ENCODE measurements at regions of chr10 and their contacts with region 1.

Region 1: GRCh38 chr10:68720793-68721672 is at the start of gene CCAR1:
- DNase-seq: peak; percentile 86 to 97 (median 96)
- ATAC-seq: peak; percentile 99
- H3K4me3 ChIP-seq: peak within 1 kb of the TSS; percentile 64
- H3K4me3 Mint-ChIP-seq: peak within 1 kb of the TSS; percentile 87 to 100 (median 96)
- H3K27ac ChIP-seq: peak within 1 kb of the TSS; percentile 96
- H3K27ac Mint-ChIP-seq: peak within 1 kb of the TSS; percentile 95 to 99 (median 98)
- H3K4me1 ChIP-seq: peaks cover 6 to 7% of the 10 kb centered on the region in 2 donors
- H3K4me1 Mint-ChIP-seq: peaks cover 10 to 23% (median 16%) of the 10 kb centered on the region in 7 donors
- H3K27me3 ChIP-seq: no peaks in the 10 kb centered on the region
- H3K27me3 Mint-ChIP-seq: peaks cover 0 to 2% (median 0%) of the 10 kb centered on the region in 5 donors
- total RNA-seq, gene CCAR1: 64.4 to 89.5 (median 88.2) TPM

Region 2: DNA sequence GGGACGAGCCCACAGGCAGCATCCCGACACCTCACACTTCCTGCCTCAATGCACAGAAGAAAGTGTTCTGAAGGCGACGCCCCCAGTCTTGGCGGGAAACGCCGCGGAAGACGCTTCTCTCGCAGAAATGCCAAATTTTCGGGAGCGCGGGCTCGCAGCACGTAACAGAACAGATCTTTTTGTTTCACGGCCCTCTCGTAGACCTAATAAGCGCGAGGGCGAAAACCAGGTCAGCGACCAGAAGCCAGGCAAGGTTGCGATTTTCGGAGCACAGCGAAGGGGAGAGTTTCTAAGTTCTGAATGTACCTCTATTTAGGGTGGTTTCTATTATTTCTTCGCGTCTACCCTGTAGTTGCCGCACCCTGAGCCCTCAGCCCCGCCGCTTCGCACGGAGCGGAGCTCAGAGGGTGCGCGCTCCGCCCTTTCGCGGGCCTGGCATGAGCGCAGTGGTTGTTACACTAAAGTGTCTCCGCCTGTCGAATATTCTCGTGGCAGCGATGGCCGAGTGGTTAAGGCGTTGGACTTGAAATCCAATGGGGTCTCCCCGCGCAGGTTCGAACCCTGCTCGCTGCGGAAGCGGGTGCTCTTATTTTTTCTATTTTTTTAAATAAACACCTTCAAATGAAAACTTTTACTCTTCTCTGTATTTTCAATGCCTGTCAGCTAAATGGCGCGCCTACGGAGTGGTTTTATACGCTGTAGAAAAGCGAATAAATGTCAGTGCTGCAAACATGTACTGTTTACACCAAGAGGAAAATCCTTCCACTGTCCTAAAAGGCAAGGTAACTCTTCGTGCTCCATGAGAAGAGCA is 956.8 kb before region 1 on chr10:
- CTCF ChIA-PET with region 1: no interaction called
- POLR2A ChIA-PET with region 1: no interaction called
- intact Hi-C with region 1: loop called in 1 of 2 experiments (anchors 2 kb)
- DNase-seq: peak; percentile 96 to 99 (median 98)
- ATAC-seq: peak; percentile 88
- H3K4me3 ChIP-seq: peak overlapping the region; percentile 99
- H3K4me3 Mint-ChIP-seq: peak overlapping the region; percentile 81 to 99 (median 94)
- H3K27ac ChIP-seq: peak overlapping the region; percentile 81
- H3K27ac Mint-ChIP-seq: peak overlapping the region; percentile 95 to 100 (median 100)
- H3K4me1 ChIP-seq: peaks cover 4 to 6% of the 10 kb centered on the region in 2 donors
- H3K4me1 Mint-ChIP-seq: peaks cover 0 to 37% (median 14%) of the 10 kb centered on the region in 7 donors
- H3K27me3 ChIP-seq: no peaks in the 10 kb centered on the region
- H3K27me3 Mint-ChIP-seq: peaks cover 0 to 16% (median 0%) of the 10 kb centered on the region in 5 donors

Region 3: DNA sequence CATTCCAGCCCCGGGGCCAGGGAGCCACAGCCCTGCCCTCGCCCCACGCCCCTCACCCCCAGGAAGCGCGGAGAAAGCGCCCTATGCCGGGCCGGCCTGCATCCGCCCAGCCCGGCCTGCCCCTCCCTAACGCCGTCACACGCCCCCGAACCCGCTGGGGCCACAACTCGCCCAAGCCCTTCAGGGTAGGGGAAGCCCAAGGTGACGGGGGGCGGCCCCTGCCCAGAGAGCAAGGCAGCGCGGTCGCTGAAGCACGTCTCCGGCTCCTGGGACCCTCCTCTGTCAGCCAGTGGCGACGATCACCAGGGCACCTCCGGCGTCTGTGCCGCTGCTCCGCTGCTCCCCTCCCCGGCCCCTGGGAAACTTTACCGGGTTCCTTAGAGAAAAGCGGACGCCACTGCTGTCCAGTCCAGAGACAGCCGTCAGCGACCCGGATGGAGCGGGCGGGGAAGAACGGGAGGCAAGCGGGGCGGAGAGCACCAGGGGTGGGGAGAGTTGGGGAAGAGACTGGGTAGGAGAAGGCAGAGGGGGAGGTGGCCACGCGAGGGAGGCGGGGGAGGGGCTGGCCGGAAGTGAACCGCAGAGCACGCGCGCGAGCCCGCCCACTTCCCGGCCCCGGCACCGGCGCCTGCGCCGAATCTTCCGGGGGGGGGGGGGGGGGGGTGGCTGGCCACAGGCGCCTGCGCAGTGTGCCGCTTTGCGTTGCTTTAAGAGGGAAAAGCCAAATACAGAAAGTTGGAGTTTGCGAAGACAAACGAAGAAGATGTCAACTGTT is 646.1 kb before region 1 on chr10 and contains the start of gene HERC4:
- CTCF ChIA-PET with region 1: no interaction called
- POLR2A ChIA-PET with region 1: no interaction called
- intact Hi-C with region 1: loop called in 1 of 2 experiments (anchors 2 kb)
- DNase-seq: peak; percentile 80 to 91 (median 89)
- ATAC-seq: peak; percentile 97
- H3K4me3 ChIP-seq: peak within 1 kb of the TSS; percentile 91
- H3K4me3 Mint-ChIP-seq: peak within 1 kb of the TSS; percentile 91 to 98 (median 96)
- H3K27ac ChIP-seq: peak within 1 kb of the TSS; percentile 96
- H3K27ac Mint-ChIP-seq: peak within 1 kb of the TSS; percentile 89 to 95 (median 94)
- H3K4me1 ChIP-seq: peaks cover 15 to 21% of the 10 kb centered on the region in 2 donors
- H3K4me1 Mint-ChIP-seq: peaks cover 26 to 51% (median 41%) of the 10 kb centered on the region in 7 donors
- H3K27me3 ChIP-seq: peaks cover 0 to 3% of the 10 kb centered on the region in 2 donors
- H3K27me3 Mint-ChIP-seq: peaks cover 0 to 2% (median 0%) of the 10 kb centered on the region in 5 donors
- total RNA-seq, gene HERC4: 65.7 to 113 (median 78.6) TPM

Region 4: DNA sequence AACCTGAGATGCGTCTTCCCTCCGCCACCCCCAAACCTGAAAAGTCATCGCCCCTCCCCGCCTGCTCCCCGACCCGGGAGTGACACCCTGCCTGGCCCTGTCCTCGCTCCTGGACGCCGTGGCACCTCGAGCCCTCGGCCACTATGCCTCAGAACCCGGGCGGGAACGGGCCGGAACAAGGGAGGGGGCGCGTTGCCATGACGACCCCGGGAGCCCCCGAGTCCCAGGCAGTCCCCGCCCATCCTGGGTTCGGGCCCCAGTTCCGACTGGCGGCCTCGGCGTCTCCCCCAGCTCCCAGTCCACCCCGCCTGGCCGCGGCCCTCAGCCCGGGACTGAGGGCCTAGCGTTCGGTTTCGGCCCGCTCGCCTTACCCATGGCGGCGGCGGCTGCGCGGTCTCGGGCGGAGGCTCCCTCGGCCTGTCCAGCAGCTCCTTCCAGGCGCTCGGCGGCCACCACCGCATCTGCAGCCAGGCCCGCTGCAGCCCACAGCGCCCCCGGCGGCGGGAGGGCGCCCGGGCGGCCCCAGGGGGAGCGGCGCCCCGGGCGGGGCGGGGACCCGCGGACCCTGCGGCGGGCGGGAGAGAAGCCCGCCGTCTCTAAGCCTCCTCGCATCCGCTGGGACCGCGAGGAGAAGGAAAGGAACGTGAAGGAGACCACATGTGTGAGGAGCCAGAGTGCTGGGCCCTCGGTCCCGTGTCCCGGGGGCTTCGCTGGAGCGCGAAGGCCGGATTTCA is 314.1 kb before region 1 on chr10 and contains the start of gene RUFY2:
- CTCF ChIA-PET with region 1: no interaction called
- POLR2A ChIA-PET with region 1: interaction called, 3 read pairs
- intact Hi-C with region 1: loop called (anchors 2 to 5 kb)
- DNase-seq: peak; percentile 61 to 91 (median 74)
- ATAC-seq: peak; percentile 98
- H3K4me3 ChIP-seq: peak within 1 kb of the TSS; percentile 73
- H3K4me3 Mint-ChIP-seq: peak within 1 kb of the TSS; percentile 85 to 96 (median 89)
- H3K27ac ChIP-seq: peak within 1 kb of the TSS; percentile 76
- H3K27ac Mint-ChIP-seq: peak within 1 kb of the TSS; percentile 62 to 90 (median 81)
- H3K4me1 ChIP-seq: peaks cover 3 to 7% of the 10 kb centered on the region in 2 donors
- H3K4me1 Mint-ChIP-seq: peaks cover 10 to 19% (median 17%) of the 10 kb centered on the region in 7 donors
- H3K27me3 ChIP-seq: no peaks in the 10 kb centered on the region
- H3K27me3 Mint-ChIP-seq: no peaks in the 10 kb centered on the region
- total RNA-seq, gene RUFY2: 15.1 to 24.7 (median 20.4) TPM

Region 5: DNA sequence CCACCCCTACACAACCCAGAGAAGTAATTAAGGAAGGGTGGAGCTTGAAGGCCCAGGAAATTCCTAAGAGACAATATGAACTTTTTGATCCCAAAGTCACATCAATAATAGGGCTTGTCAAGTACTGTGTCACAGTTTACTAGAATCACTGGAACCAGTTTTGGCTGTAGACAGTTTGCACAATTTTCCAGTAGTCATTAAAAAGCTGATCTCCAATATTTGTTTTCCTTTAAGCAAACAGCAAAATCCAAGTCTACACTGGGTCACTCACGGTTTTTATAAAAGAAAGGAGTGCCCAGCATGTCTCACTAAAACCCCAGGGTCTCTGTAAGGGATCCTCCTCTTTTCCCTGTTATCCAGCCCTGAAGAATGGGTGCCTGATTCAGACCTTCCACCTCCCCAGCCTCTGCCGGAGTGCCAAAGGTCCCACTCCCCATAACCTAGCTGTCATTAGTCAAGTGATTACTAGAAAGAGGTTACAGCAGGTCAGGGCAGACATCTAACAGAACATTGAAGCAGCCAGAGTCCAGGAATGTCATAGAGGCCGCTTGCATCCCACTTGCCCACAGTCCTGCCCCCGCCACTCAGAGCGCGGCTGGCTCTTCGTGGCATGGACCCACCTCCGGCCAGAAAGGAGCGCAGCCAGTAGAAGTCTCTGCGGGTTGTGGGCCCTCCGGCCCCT is 194.3 kb before region 1 on chr10:
- CTCF ChIA-PET with region 1: no interaction called
- POLR2A ChIA-PET with region 1: no interaction called
- intact Hi-C with region 1: loop called (anchors 1 kb)
- DNase-seq: peak in 1 of 9 donors; percentile 4
- ATAC-seq: no peak
- H3K4me3 ChIP-seq: peak overlapping the region; percentile 91
- H3K4me3 Mint-ChIP-seq: peak overlapping the region; percentile 87 to 94 (median 92)
- H3K27ac ChIP-seq: peak overlapping the region; percentile 96
- H3K27ac Mint-ChIP-seq: peak overlapping the region; percentile 78 to 97 (median 95)
- H3K4me1 ChIP-seq: peaks cover 0 to 5% of the 10 kb centered on the region in 2 donors
- H3K4me1 Mint-ChIP-seq: peaks cover 0 to 20% (median 7%) of the 10 kb centered on the region in 7 donors
- H3K27me3 ChIP-seq: no peaks in the 10 kb centered on the region
- H3K27me3 Mint-ChIP-seq: no peaks in the 10 kb centered on the region

Region 6: DNA sequence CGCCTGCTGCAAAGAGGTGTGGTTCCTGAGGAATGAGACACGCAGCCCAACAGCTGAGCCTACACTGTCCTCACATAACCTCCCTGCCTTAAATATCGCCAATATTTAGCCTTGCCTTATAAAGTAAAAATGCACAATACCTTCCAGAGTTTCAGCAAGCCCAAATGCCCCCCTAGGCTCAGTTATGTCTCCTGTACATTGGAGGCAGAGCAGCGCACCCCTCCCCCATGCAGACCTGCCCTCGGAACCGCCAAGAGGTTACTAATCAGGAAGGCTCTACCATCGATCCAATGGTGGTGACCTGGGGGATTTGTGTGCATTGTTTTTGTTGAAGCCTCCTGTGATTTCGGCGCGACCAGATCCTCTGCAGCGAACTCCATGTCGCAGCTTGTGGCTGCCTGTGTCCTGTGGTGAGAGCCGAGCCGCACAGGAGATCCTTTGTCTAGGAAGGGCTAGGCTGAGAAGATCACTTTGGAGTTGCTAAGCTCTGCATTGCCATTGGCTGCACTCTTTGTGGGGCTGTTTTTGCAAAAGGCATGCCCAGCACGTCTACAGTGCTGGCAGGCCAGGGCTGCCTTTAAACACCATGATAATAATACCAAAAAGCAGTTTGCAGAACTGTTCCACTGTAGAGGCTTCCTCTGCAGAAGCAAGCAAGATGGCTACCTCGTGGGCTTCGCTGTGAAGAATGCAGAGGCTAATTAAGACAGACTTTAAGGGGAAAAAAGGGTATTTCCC is 120.8 kb before region 1 on chr10:
- CTCF ChIA-PET with region 1: no interaction called
- POLR2A ChIA-PET with region 1: interaction called, 3 read pairs
- intact Hi-C with region 1: loop called in 1 of 2 experiments (anchors 2 kb)
- DNase-seq: peak; percentile 16 to 67 (median 52)
- ATAC-seq: peak; percentile 89
- H3K4me3 ChIP-seq: peak overlapping the region; percentile 78
- H3K4me3 Mint-ChIP-seq: peak overlapping the region; percentile 83 to 96 (median 92)
- H3K27ac ChIP-seq: peak overlapping the region; percentile 56
- H3K27ac Mint-ChIP-seq: peak overlapping the region; percentile 82 to 94 (median 89)
- H3K4me1 ChIP-seq: peaks cover 16 to 20% of the 10 kb centered on the region in 2 donors
- H3K4me1 Mint-ChIP-seq: peaks cover 23 to 53% (median 46%) of the 10 kb centered on the region in 7 donors
- H3K27me3 ChIP-seq: no peaks in the 10 kb centered on the region
- H3K27me3 Mint-ChIP-seq: no peaks in the 10 kb centered on the region

Region 7: GRCh38 chr10:68955832-68956532 is 234.9 kb after region 1 on chr10 and contains the start of gene DDX21:
- CTCF ChIA-PET with region 1: no interaction called
- POLR2A ChIA-PET with region 1: no interaction called
- intact Hi-C with region 1: loop called (anchors 2 kb)
- DNase-seq: peak; percentile 70 to 94 (median 89)
- ATAC-seq: peak; percentile 89
- H3K4me3 ChIP-seq: peak within 1 kb of the TSS; percentile 71
- H3K4me3 Mint-ChIP-seq: peak within 1 kb of the TSS; percentile 91 to 100 (median 98)
- H3K27ac ChIP-seq: peak within 1 kb of the TSS; percentile 97
- H3K27ac Mint-ChIP-seq: peak within 1 kb of the TSS; percentile 96 to 100 (median 99)
- H3K4me1 ChIP-seq: peaks cover 7 to 11% of the 10 kb centered on the region in 2 donors
- H3K4me1 Mint-ChIP-seq: peaks cover 15 to 53% (median 33%) of the 10 kb centered on the region in 7 donors
- H3K27me3 ChIP-seq: no peaks in the 10 kb centered on the region
- H3K27me3 Mint-ChIP-seq: no peaks in the 10 kb centered on the region
- total RNA-seq, gene DDX21: 43.5 to 101 (median 86.7) TPM

Region 8: DNA sequence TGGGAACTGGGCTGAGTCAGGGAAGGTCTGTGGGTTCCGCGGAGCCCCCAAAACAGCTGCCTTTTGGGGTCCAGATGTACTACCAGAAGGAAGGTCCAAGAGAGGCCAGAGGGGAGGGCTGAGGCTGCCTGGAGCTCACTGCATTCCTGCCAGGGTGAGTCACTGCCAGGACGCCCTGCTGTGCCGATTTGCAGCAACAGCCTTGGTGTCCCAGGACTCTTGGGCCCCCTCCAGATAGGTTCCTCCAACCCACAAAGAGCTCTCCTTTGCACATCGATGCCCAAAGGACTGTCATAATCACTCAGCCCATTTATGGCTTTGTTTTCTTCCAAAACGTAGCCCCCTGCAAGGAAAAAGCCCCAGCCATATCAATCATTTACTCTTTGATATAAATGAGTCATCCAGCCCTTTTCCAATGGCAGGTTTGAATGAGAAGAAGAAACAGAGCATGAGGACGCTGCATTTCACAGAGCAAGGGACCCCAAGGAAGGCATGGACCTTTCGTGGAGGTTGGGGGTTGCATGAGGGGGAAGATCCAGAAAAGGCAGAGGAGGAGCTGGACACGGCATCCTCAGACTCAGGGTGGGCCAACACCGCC is 1048.5 kb after region 1 on chr10:
- CTCF ChIA-PET with region 1: no interaction called
- POLR2A ChIA-PET with region 1: no interaction called
- intact Hi-C with region 1: no loop called
- DNase-seq: no peak
- ATAC-seq: no peak
- H3K4me3 ChIP-seq: no peak overlapping the region
- H3K4me3 Mint-ChIP-seq: no peak overlapping the region
- H3K27ac ChIP-seq: no peak overlapping the region
- H3K27ac Mint-ChIP-seq: no peak overlapping the region
- H3K4me1 ChIP-seq: no peaks in the 10 kb centered on the region
- H3K4me1 Mint-ChIP-seq: peaks cover 0 to 3% (median 0%) of the 10 kb centered on the region in 7 donors
- H3K27me3 ChIP-seq: no peaks in the 10 kb centered on the region
- H3K27me3 Mint-ChIP-seq: peaks cover 0 to 20% (median 5%) of the 10 kb centered on the region in 5 donors

Measured in naive thymus-derived CD4-positive, alpha-beta T cell (primary cell).